Cardiac septum (tissue), 1 donor: ENCODE measurements at regions of chr3 and their contacts with region 1.

Region 1: GRCh38 chr3:9669720-9670432 is 20.6 kb downstream of the MTMR14 start:
- DNase-seq: no peak

Region 2: GRCh38 chr3:9600597-9600996 is 69.3 kb before region 1 on chr3:
- intact Hi-C with region 1: no loop called
- DNase-seq: no peak

Region 3: GRCh38 chr3:9649791-9650521 is 19.9 kb before region 1 on chr3:
- intact Hi-C with region 1: loop called (anchors 2 kb)
- DNase-seq: peak; percentile 63